MCF 10A (cell line): ENCODE measurements at regions of chr4 and their contacts with region 1.

Region 1: DNA sequence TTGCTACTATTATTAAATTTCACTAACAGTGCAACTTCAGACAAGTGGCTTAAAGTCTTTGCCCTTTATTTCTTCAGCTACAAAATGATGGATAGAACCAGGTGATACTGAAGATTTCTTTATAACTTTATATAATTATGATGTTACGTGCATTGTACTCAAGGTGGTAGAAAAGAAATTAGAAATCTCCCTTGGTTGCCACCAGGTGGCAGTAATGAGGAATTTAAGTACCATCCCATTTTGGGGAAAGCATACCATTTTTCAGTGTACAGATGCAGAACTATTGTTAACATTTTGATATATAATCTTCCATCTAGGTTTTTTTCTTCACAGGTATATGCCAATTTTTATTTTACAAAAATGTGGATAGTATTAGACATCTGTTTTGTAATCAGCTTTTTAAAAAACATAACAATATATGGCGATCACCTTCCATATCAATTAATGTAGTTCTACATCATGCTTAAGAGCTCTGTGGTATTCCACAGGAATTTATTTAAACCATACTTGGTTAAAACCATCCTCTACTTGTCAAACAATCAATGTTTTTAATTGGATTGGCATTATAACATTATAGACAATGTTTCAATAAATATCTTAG is 37.7 kb upstream of the RAB33B start:
- DNase-seq: peak; percentile 60
- H3K4me3 Mint-ChIP-seq: no peak overlapping the region
- H3K27ac Mint-ChIP-seq: peak overlapping the region; percentile 71
- H3K4me1 Mint-ChIP-seq: peaks cover 19% of the 10 kb centered on the region
- H3K27me3 Mint-ChIP-seq: no peaks in the 10 kb centered on the region
- CTCF ChIP-seq: peak; percentile 46

Region 2: DNA sequence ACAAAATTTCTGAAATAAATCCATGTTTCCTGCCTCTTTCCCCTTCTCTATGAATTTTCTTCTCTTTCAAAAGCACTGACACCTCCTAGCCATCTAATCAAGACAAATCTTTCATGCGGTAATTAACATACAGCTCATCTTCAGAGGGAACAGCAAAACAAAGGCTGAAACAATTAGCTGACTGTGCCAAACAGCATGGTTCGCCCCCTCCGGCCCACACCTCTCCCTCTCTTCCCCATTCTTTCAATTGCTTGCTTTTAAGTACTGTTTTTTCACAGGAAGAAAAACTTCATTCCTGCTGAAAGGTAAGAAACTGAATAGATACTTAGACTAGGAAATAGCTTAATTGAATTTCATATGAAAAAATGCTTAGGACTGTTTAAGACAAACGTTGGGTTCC is 691.6 kb before region 1 on chr4:
- CTCF ChIA-PET with region 1: no interaction called
- POLR2A ChIA-PET with region 1: no interaction called
- intact Hi-C with region 1: no loop called
- DNase-seq: no peak
- H3K4me3 Mint-ChIP-seq: no peak overlapping the region
- H3K27ac Mint-ChIP-seq: no peak overlapping the region
- H3K4me1 Mint-ChIP-seq: no peaks in the 10 kb centered on the region
- H3K27me3 Mint-ChIP-seq: no peaks in the 10 kb centered on the region
- CTCF ChIP-seq: no peak

Region 3: DNA sequence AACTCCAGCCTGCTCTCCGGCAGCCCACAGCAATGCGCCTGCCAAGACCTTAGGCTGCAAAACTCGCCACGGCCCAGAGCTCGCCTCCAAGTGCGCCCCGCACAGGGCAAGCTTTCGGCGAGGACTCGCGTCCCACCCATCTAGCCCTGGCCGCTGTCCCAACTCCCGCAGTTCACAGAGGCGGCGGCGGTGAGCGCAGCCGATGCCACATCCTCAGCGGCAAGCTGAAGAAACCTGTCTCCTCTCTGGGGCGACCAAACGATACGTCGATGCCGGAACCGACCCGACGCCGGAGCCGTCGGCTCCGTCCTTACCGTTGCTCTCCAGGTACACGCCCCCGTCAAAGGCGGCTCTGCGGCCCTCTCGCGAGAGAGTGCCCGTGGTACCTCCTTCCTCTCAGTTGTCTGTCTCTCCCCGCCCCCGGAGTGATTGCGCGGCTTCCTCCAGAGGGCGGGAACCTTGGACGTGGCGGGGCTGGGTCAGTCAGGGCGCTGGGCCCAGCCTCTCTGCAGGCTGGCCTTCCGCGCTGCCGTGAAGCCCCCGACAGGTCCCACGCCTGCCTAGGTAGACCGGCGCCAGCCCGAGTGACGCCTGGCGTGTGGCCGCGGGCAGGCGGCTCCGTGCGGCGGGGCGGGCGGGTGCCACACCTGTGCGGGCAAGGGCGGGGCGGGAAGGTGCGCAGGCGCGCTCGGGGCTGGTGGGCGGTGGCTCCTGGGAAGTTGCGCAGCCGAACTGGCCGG is 37.4 kb after region 1 on chr4:
- CTCF ChIA-PET with region 1: interaction called, 4 read pairs
- POLR2A ChIA-PET with region 1: interaction called, 70 read pairs
- intact Hi-C with region 1: loop called (anchors 1 kb)
- DNase-seq: peak; percentile 98
- H3K4me3 Mint-ChIP-seq: peak overlapping the region; percentile 100
- H3K27ac Mint-ChIP-seq: peak overlapping the region; percentile 97
- H3K4me1 Mint-ChIP-seq: peaks cover 45% of the 10 kb centered on the region
- H3K27me3 Mint-ChIP-seq: no peaks in the 10 kb centered on the region
- CTCF ChIP-seq: no peak

Region 4: DNA sequence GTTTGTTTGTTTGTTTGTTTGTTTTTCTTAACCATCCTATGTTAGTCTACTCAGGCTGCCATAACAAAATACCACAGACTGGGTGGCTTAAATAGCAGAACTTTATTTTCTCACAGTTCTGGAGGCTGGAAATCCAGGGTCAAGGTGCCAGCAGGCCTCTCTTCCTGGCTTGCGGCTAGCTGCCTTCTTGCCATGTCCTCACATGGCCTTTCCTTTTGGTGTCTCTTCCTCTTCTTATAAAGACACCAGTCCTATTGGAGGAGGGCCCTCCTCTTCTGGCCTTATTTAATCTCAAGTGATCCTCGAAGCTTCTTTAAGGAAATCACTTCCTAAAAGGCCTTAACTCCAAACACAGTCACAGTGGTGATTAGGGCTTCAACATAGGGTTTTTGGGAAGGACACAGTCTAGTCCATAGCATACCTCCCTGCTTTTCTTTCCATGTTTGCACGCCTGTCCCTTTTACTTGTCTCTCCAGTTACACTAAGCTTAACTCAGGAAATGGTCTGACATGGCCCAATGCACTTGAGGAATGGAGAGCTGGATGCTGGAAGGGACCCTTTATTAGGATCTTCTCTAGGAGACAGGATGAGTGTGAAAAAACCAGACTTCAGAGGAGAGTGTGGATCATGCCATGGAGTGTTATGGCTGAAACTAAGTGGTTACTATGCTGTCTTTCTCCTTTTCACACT is 213.4 kb after region 1 on chr4:
- CTCF ChIA-PET with region 1: no interaction called
- POLR2A ChIA-PET with region 1: no interaction called
- intact Hi-C with region 1: no loop called
- DNase-seq: no peak
- H3K4me3 Mint-ChIP-seq: no peak overlapping the region
- H3K27ac Mint-ChIP-seq: no peak overlapping the region
- H3K4me1 Mint-ChIP-seq: peaks cover 10% of the 10 kb centered on the region
- H3K27me3 Mint-ChIP-seq: no peaks in the 10 kb centered on the region
- CTCF ChIP-seq: no peak

Region 5: GRCh38 chr4:139642364-139642763 is 226.2 kb after region 1 on chr4:
- CTCF ChIA-PET with region 1: no interaction called
- POLR2A ChIA-PET with region 1: no interaction called
- intact Hi-C with region 1: loop called (anchors 10 kb)
- DNase-seq: no peak
- H3K4me3 Mint-ChIP-seq: no peak overlapping the region
- H3K27ac Mint-ChIP-seq: no peak overlapping the region
- H3K4me1 Mint-ChIP-seq: peaks cover 40% of the 10 kb centered on the region
- H3K27me3 Mint-ChIP-seq: no peaks in the 10 kb centered on the region
- CTCF ChIP-seq: no peak

Region 6: DNA sequence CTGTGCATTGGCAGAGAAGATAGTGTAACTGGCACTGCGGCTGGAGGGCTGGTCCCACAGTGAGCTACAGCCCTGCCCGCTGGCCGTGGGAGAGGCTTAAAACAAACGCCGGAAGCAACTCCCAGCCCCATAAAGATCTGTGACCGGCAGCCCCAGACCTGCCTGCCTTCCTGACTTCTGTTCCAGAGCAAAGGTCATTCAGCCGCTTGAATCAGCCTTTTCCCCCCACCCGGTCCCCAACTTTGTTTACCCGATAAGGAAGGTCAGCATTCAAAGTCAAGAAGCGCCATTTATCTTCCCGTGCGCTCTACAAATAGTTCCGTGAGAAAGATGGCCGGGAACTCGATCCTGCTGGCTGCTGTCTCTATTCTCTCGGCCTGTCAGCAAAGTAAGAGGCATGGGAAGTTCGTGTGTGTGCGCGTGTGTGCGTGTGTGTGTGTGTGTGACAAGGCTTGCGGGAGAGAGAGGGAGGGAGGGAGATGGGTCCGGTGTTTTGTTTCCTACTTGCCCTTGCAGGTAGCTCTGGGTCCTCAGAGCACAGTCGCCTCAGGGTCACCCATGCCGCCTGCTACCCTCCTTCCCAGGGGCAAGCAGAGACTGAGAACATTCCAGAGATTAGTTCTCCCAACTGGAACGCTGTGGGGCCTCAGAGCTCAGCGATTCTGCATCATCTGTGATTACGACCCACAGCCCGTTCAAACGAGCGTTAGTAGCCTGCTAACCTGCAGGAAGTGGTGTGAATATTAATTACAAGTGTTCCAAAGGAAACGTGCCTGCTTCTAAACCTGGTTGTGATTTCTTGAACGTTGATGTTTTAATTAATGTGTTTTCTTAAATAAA is 249.7 kb after region 1 on chr4 and contains the start of gene MGST2:
- CTCF ChIA-PET with region 1: no interaction called
- POLR2A ChIA-PET with region 1: no interaction called
- intact Hi-C with region 1: no loop called
- DNase-seq: peak; percentile 65
- H3K4me3 Mint-ChIP-seq: peak within 1 kb of the TSS; percentile 81
- H3K27ac Mint-ChIP-seq: peak within 1 kb of the TSS; percentile 93
- H3K4me1 Mint-ChIP-seq: peaks cover 23% of the 10 kb centered on the region
- H3K27me3 Mint-ChIP-seq: no peaks in the 10 kb centered on the region
- CTCF ChIP-seq: no peak
- total RNA-seq, gene MGST2: 27.5 and 41.5 TPM in 2 replicates

Region 7: DNA sequence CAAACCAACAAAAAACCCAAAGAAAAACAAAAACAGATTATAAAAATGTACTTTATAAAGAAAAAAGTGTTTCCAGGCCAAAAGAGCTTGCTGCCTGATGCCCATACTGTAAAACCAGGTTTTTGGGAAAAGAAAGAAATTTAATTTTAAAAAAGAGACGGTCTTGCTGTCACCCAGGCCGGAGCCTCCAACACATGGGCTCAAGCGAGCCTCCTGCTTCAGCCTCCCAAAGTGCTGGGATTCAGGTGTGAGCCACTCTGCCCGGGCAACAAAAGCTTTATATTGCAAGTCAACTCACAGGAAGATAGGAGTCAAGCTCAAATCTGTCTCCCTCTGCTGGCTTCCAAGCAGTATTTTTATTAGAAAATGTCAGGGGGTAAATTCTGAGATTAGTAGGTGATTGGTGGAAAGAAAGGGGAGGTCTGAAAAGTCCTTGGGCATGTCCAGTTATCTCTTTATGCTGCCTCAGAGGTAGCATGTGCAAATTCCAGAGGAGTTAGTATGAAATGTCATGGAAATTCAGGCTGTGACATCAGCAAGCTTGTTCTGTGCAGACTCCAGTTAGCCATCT is 288.8 kb after region 1 on chr4:
- CTCF ChIA-PET with region 1: no interaction called
- POLR2A ChIA-PET with region 1: no interaction called
- intact Hi-C with region 1: no loop called
- DNase-seq: peak; percentile 16
- H3K4me3 Mint-ChIP-seq: no peak overlapping the region
- H3K27ac Mint-ChIP-seq: no peak overlapping the region
- H3K4me1 Mint-ChIP-seq: no peaks in the 10 kb centered on the region
- H3K27me3 Mint-ChIP-seq: no peaks in the 10 kb centered on the region
- CTCF ChIP-seq: no peak